PC-9 (cell line): ENCODE measurements at regions of chr20 and their contacts with region 1.

Region 1: GRCh38 chr20:11890331-11891080 is 27.2 kb upstream of the BTBD3 start:
- DNase-seq: peak; percentile 67 to 95
- H3K4me3 ChIP-seq: peak overlapping the region; percentile 91
- H3K27ac ChIP-seq: peak overlapping the region; percentile 49; the same call in 1 of the 2 replicates
- H3K4me1 ChIP-seq: peaks cover 17% of the 10 kb centered on the region
- H3K27me3 ChIP-seq: no peaks in the 10 kb centered on the region
- CTCF ChIP-seq: no peak

Region 2: GRCh38 chr20:11716239-11716944 is 174.1 kb before region 1 on chr20:
- CTCF ChIA-PET with region 1: no interaction called
- POLR2A ChIA-PET with region 1: no interaction called
- intact Hi-C with region 1: loop called (anchors 1 kb)
- DNase-seq: peak; percentile 12 to 59
- H3K4me3 ChIP-seq: no peak overlapping the region
- H3K27ac ChIP-seq: no peak overlapping the region
- H3K4me1 ChIP-seq: no peaks in the 10 kb centered on the region
- H3K27me3 ChIP-seq: no peaks in the 10 kb centered on the region
- CTCF ChIP-seq: peak; percentile 55; the same call in 1 of the 2 replicates

Region 3: DNA sequence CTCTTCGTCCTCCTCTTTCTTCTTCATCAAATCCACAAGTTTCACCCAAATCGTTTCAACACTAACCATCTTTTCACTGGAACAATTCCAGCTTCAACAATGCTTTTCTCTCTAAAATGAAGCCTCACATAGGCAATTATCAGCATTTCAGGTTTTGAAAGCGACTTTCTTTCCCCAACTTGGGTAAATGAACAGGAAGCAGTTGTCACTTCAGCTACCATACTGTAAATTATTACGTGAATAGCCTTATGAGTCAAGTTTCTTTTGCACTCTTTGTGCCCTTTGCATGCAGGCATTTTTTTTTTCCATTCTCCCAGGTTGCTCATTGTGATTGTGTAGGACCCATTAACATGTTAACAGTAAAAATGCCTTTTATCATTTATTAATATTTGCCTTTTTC is 94.5 kb before region 1 on chr20:
- CTCF ChIA-PET with region 1: no interaction called
- POLR2A ChIA-PET with region 1: no interaction called
- intact Hi-C with region 1: loop called (anchors 2 kb)
- DNase-seq: no peak
- H3K4me3 ChIP-seq: no peak overlapping the region
- H3K27ac ChIP-seq: no peak overlapping the region
- H3K4me1 ChIP-seq: peaks cover 51% of the 10 kb centered on the region
- H3K27me3 ChIP-seq: no peaks in the 10 kb centered on the region
- CTCF ChIP-seq: no peak

Region 4: GRCh38 chr20:13174402-13174801 is 1283.9 kb after region 1 on chr20:
- CTCF ChIA-PET with region 1: no interaction called
- POLR2A ChIA-PET with region 1: no interaction called
- intact Hi-C with region 1: loop called (anchors 5 kb)
- DNase-seq: no peak
- H3K4me3 ChIP-seq: no peak overlapping the region
- H3K27ac ChIP-seq: no peak overlapping the region
- H3K4me1 ChIP-seq: peaks cover 13% of the 10 kb centered on the region
- H3K27me3 ChIP-seq: no peaks in the 10 kb centered on the region
- CTCF ChIP-seq: no peak